ENCODE measurements at regions of chr3 and their contacts with region 1.

Region 1: DNA sequence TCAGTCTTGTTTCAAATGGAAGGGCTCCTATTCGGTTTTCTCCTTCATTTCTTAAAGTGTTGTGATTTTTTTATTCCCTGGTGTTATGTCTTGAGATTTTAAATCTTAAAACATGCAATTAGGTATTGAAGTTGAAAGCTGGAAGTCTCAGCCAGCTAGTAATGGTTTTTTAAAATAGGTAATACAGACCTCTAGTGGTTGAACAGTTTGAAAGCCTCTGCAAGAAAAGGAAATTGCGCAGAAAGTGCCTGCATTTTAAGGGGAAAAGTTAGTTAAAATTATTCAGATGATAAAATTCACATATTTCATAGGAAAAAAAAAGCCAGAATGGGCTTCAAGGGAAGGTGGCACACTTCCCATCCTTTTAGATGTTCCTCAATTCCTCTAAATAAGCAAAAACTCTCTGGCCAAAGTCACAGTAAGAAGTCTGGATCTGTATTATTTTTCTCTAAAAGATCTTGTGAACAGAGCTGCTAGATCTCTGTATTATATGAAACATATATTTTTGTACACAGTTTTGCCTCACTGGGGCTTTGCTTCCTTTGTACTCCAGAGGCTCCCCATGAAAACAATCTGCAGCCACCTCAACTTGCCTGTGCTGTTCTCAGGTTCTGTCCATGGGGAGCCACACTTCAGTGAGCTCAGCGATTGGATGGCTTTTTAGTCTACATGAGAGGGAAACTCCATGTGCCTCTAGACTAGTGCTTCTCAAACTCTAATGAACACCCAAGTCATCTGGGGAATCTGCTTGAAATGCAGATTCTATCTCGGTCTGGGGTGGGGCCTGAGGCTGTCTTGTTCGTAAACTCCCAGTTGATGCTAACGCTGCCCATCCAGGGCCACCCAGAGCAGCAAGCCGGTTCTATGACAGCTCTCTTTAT is 21.5 kb downstream of the AGTR1 start:
- DNase-seq: no peak
- ATAC-seq: peak; percentile 45; the same call in 1 of the 3 replicates
- H3K4me3 ChIP-seq: no peak overlapping the region
- H3K27ac ChIP-seq: no peak overlapping the region
- H3K4me1 ChIP-seq: peaks cover 30% of the 10 kb centered on the region
- H3K27me3 ChIP-seq: no peaks in the 10 kb centered on the region; a peak in 1 of 5 replicates
- CTCF ChIP-seq: peak; percentile 52
- EP300 ChIP-seq: no peak
- POLR2A ChIP-seq: no peak
- RAD21 ChIP-seq: peak; percentile 48; the same call in 1 of the 2 replicates

Region 2: DNA sequence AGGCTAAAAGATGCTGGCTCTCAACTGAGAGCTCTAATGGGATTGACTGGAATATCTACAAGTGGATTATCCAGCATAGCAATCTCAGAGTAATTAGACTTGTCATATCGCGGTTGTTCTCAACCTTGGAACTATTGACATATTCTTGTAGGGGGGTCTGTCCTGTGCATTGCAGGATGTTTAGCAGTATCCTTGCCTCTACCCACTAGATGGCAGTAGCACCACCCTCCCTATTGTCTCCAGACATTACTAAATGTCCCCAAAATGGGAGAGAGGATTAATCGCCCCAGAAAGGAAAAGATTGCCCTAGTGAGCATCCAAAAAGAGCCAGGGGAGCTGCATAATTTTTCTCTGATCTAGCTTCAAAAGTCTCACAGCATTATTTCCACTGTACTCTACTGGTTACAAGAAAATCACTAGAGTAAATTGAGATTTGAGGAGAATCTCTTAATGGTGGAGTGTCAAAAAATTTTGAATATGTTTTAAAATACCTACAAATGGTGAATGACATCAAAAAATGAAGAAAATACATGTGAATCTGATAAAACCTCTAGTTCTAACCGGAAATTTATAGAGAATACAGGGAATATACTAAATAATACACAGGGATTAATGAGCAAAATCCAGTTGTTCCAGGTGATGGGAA is 409.7 kb before region 1 on chr3:
- CTCF ChIA-PET with region 1: interaction called, 4 read pairs
- POLR2A ChIA-PET with region 1: no interaction called
- in situ Hi-C with region 1: no loop called
- intact Hi-C with region 1: loop called (anchors 2 kb)
- DNase-seq: peak; percentile 46
- ATAC-seq: peak; percentile 92
- H3K4me3 ChIP-seq: no peak overlapping the region
- H3K27ac ChIP-seq: no peak overlapping the region
- H3K4me1 ChIP-seq: no peaks in the 10 kb centered on the region
- H3K27me3 ChIP-seq: no peaks in the 10 kb centered on the region
- CTCF ChIP-seq: peak; percentile 64
- EP300 ChIP-seq: no peak
- POLR2A ChIP-seq: no peak
- RAD21 ChIP-seq: peak; percentile 35; the same call in 1 of the 2 replicates

Region 3: GRCh38 chr3:148379763-148380382 is 339.3 kb before region 1 on chr3:
- CTCF ChIA-PET with region 1: interaction called, 21 read pairs
- POLR2A ChIA-PET with region 1: no interaction called
- in situ Hi-C with region 1: loop called (anchors 10 kb)
- intact Hi-C with region 1: loop called (anchors 1 kb)
- DNase-seq: peak; percentile 71
- ATAC-seq: peak; percentile 98
- H3K4me3 ChIP-seq: no peak overlapping the region
- H3K27ac ChIP-seq: no peak overlapping the region
- H3K4me1 ChIP-seq: no peaks in the 10 kb centered on the region
- H3K27me3 ChIP-seq: no peaks in the 10 kb centered on the region
- CTCF ChIP-seq: peak; percentile 86
- EP300 ChIP-seq: peak in 1 of 2 experiments; percentile 15; a peak in 1 of 4 replicates
- POLR2A ChIP-seq: no peak
- RAD21 ChIP-seq: peak; percentile 73

Region 4: GRCh38 chr3:148459931-148460513 is 259.2 kb before region 1 on chr3:
- CTCF ChIA-PET with region 1: no interaction called
- POLR2A ChIA-PET with region 1: no interaction called
- in situ Hi-C with region 1: no loop called
- intact Hi-C with region 1: loop called (anchors 1 kb)
- DNase-seq: no peak
- ATAC-seq: no peak
- H3K4me3 ChIP-seq: no peak overlapping the region
- H3K27ac ChIP-seq: no peak overlapping the region
- H3K4me1 ChIP-seq: peaks cover 28% of the 10 kb centered on the region
- H3K27me3 ChIP-seq: peaks cover 0 to 1% of the 10 kb centered on the region in 2 experiments; a peak in 1 of 5 replicates
- CTCF ChIP-seq: peak; percentile 49; the same call in 1 of the 2 replicates
- EP300 ChIP-seq: no peak
- POLR2A ChIP-seq: no peak
- RAD21 ChIP-seq: peak; percentile 48; the same call in 1 of the 2 replicates

Region 5: GRCh38 chr3:148682997-148683396 is 36.2 kb before region 1 on chr3:
- CTCF ChIA-PET with region 1: no interaction called
- POLR2A ChIA-PET with region 1: no interaction called
- in situ Hi-C with region 1: no loop called
- intact Hi-C with region 1: no loop called
- DNase-seq: no peak
- ATAC-seq: no peak
- H3K4me3 ChIP-seq: no peak overlapping the region
- H3K27ac ChIP-seq: no peak overlapping the region
- H3K4me1 ChIP-seq: no peaks in the 10 kb centered on the region
- H3K27me3 ChIP-seq: no peaks in the 10 kb centered on the region
- CTCF ChIP-seq: no peak
- EP300 ChIP-seq: no peak
- POLR2A ChIP-seq: no peak
- RAD21 ChIP-seq: no peak

Region 6: DNA sequence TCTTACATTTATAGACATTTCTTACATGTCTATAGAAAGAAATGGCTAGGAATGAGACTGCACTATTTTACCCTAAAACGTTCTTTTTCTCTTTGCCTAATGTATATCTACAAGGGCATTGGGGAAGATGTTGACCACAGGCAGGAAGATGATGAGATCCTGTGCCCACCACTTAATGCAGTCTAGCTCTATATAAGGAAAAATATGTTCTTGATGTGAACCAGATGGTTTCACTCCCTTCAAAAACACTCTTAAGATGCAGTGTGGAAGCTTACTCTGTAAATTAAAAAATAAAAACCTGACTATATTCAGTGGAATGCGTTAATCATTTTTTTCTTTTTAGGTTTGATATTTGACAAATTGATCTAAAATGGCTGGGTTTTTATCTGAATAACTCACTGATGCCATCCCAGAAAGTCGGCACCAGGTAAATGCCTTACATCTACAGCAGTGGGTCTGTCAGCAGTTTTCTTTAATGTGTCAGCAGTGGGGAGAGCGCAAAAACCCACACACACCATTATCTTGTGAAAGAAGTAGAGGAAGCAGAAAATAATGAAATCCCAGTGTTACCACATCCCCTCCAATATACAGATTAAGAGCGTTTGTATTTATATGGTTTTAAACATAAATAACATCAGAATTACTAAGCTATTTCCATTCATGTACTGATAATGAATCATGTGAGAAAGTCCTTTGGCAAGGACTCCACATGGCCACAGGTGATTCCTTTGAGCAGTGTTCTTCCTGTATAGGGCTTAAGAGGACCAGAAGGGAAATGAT is 11.4 kb before region 1 on chr3:
- CTCF ChIA-PET with region 1: no interaction called
- POLR2A ChIA-PET with region 1: no interaction called
- in situ Hi-C with region 1: no loop called
- intact Hi-C with region 1: no loop called
- DNase-seq: no peak
- ATAC-seq: no peak
- H3K4me3 ChIP-seq: no peak overlapping the region
- H3K27ac ChIP-seq: no peak overlapping the region
- H3K4me1 ChIP-seq: peaks cover 50% of the 10 kb centered on the region
- H3K27me3 ChIP-seq: no peaks in the 10 kb centered on the region
- CTCF ChIP-seq: no peak
- EP300 ChIP-seq: no peak
- POLR2A ChIP-seq: no peak
- RAD21 ChIP-seq: no peak

Region 7: DNA sequence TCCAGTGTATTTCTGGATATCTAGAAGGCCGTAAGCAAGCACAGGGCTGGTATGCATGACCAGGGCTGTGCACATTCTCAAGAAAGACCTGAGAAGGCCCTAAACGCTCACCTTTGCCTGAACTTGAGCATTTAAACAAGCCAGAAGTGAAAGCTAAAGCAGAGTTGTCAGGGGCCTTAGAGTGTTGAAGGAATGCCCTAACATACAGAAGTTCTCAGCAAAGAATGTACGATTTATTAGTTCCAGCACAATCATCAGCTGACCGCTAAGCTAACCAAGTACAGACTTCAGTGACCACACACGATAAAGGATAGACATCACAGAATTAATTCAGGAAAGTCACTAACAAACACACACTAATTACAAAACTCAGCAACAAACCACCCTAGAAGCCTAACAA is 358.4 kb after region 1 on chr3:
- CTCF ChIA-PET with region 1: no interaction called
- POLR2A ChIA-PET with region 1: no interaction called
- in situ Hi-C with region 1: no loop called
- intact Hi-C with region 1: no loop called
- DNase-seq: no peak
- ATAC-seq: no peak
- H3K4me3 ChIP-seq: no peak overlapping the region
- H3K27ac ChIP-seq: no peak overlapping the region
- H3K4me1 ChIP-seq: no peaks in the 10 kb centered on the region
- H3K27me3 ChIP-seq: no peaks in the 10 kb centered on the region
- CTCF ChIP-seq: no peak
- EP300 ChIP-seq: no peak
- POLR2A ChIP-seq: no peak
- RAD21 ChIP-seq: no peak

Measured in HepG2 (cell line).